Posterior cingulate gyrus (tissue), 11 donors: ENCODE measurements at regions of chr5 and their contacts with region 1.

Region 1: DNA sequence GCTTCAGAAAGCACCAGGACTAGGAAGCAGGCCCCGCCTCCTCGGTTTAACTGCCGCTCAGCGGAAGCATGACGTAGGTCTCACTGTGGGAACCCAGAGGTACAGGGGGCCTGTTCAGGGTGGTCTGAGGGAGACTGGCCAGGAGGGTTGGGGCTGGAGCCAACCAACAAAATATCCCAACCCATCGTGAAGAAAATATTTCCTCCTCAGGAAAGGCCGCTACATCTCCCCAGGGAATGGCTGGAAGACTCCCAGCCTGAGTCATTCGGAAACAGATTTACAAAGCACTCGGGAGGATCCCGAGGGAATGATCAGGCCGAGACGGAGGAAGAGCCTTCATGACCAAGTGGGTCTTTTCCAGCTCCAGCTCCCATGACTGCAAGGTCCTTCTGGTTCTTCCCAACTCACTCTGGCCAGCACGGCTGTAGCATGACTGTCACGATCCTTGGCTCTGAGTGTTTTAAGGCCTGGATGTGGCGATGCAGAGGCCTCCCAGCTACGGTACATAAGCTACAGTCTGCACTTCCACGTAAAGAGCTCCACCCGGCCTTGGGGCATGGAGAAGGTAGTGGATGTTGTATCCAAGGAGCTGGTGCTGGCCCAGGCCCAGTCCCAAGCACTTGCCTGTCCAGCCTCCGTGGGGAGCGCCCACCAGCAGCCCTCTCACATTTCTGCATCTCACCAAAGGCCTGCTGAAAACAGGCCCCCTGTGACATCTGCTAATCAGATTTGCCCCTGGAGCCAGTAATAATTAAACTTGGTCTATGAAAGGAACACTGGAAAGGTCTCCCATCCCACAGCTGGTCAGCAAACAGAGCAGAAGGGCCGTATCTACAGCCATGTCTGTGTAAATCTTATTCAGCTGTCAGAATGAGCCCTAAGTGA is 100.6 kb downstream of the LHFPL2 start:
- DNase-seq: no peak

Region 2: DNA sequence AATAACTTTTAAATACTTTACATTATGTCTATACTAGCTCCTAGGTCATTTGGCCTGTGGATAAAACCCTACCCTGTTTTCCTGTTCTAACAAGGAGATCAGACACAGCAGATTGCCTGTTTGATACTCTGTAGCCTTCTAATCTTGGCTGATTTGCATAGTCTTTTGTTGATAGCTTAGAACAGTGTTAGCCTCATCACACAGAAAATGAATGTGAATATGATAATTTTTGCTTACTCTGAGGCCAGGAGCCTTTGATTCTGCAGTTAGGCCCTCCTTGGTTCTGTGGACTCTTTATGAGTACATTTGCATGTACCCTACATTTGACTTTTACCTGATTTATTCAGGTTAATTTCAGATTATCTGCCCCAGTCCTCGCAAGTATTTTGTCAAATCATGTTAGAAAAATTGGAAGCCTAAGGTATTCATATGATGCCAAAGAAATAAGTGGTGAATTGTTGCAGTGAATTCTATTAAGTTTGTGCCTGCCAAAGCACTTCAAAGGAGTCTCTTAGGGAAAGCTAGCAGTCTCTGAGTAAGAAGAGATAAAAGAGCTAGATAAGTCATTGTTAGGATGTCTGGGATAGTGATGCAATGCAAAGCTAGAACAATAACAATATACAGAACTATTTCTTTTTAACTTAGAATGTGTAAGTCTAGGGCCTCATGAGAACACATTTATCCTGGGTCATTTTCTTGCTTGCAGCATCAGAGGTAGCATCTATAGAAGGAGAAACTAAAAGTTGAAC is 131.1 kb before region 1 on chr5:
- intact Hi-C with region 1: no loop called
- DNase-seq: no peak

Region 3: DNA sequence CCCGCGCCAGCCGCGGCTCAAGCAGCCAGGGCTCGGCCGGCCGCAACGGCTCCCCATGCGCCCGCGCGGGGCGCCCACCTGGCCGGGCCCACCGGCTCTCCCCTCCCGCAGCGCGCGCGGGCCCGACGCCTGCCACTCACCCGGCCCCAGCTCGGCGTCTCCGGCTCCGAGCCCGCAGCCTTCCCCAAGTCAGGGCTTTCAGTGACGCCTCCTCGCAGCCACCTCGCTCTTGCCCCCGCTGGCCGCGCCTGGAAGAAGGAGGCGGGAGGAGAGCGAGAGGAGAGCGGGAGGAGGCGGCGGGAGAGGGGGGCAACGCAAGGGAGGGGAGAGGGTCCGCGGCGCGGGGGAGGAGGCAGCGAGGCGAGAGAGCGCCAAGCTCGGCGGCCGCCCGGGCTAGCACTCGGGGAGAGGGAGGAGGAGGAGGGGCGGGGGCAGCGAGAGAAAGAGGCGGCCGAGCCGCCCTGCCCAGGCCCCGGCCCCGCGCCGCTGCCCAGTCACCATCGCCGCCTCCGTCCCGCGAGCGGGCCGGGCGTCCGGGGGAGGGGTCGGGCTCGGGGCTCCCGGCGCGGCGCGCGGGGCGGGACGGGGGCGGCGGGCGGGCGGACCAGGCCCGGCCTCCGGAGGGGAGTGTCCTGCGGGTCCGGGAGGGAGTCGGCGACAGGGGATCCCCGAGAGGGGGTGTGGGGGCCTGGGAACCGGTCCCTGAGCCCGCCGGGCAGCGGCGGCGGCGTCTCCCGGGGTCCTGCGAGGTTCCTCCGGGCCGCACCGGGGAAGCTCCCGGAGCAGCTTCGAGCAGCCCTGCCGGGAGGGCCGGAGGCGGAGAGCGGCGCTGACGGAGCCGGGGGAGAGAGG is 100.6 kb after region 1 on chr5 and contains the start of gene LHFPL2:
- intact Hi-C with region 1: loop called (anchors 10 kb)
- DNase-seq: peak; percentile 35 to 92 (median 50)

Region 4: GRCh38 chr5:78795757-78796156 is 247.8 kb after region 1 on chr5:
- intact Hi-C with region 1: no loop called
- DNase-seq: no peak

Region 5: GRCh38 chr5:78886341-78887230 is 338.6 kb after region 1 on chr5:
- intact Hi-C with region 1: no loop called
- DNase-seq: no peak